Esophagus muscularis mucosa (tissue), 4 donors: ENCODE measurements at regions of chr12 and their contacts with region 1.

Region 1: GRCh38 chr12:11581179-11581755 is 68.2 kb upstream of the ETV6 start:
- DNase-seq: no peak
- H3K4me3 ChIP-seq: no peak overlapping the region
- H3K27ac ChIP-seq: peak overlapping the region in 3 of 4 donors; percentile 56 to 68 (median 66)
- H3K4me1 ChIP-seq: peaks cover 0 to 47% (median 34%) of the 10 kb centered on the region in 4 donors
- H3K27me3 ChIP-seq: no peaks in the 10 kb centered on the region
- CTCF ChIP-seq: peak; percentile 60 to 68 (median 67)
- EP300 ChIP-seq: no peak
- POLR2A ChIP-seq: no peak

Region 2: GRCh38 chr12:11344500-11344899 is 236.8 kb before region 1 on chr12:
- intact Hi-C with region 1: no loop called
- DNase-seq: no peak
- H3K4me3 ChIP-seq: no peak overlapping the region
- H3K27ac ChIP-seq: no peak overlapping the region
- H3K4me1 ChIP-seq: no peaks in the 10 kb centered on the region
- H3K27me3 ChIP-seq: no peaks in the 10 kb centered on the region
- CTCF ChIP-seq: no peak
- EP300 ChIP-seq: no peak
- POLR2A ChIP-seq: no peak

Region 3: DNA sequence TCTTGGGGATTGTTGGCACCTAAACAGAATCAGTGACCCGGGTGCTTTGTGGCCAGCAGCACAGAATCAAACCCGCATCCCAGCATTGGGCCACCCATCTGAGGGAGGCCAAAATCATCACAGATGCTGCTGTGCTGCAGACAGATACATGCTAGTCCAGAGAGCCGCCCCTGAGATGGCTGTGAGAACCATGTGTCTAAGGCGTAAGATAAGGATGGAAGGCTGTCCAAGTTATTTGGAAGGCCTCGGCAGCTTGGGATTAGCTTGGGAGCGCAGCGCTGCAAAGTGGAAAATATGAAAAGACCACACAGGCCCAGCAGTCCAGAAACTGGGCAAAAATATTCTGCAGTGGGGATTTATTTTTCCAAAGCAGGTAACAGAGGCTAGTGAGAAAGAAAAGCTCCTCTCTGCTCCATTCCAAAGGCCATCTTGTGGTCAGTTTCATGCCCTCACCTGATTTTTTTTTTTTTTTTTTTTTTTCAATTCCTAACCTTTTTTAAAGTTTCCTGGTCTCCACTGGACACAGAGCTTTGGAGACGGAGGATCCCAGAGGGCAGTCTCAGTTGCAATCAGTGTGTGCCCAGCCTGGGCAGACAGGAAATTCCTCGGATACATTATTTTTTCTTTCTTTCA is 310.6 kb after region 1 on chr12:
- intact Hi-C with region 1: loop called (anchors 5 kb)
- DNase-seq: no peak
- H3K4me3 ChIP-seq: no peak overlapping the region
- H3K27ac ChIP-seq: peak overlapping the region; percentile 5 to 45 (median 29)
- H3K4me1 ChIP-seq: peaks cover 7 to 18% (median 10%) of the 10 kb centered on the region in 4 donors
- H3K27me3 ChIP-seq: no peaks in the 10 kb centered on the region
- CTCF ChIP-seq: peak in 2 of 3 experiments; percentile 31 to 42
- EP300 ChIP-seq: no peak
- POLR2A ChIP-seq: no peak

Region 4: GRCh38 chr12:12032851-12033588 is 451.8 kb after region 1 on chr12:
- intact Hi-C with region 1: loop called (anchors 1 kb)
- DNase-seq: peak; percentile 94
- H3K4me3 ChIP-seq: peak overlapping the region; percentile 46 to 59 (median 50)
- H3K27ac ChIP-seq: peak overlapping the region; percentile 75 to 79 (median 78)
- H3K4me1 ChIP-seq: peaks cover 8 to 12% (median 10%) of the 10 kb centered on the region in 4 donors
- H3K27me3 ChIP-seq: no peaks in the 10 kb centered on the region
- CTCF ChIP-seq: peak; percentile 83 to 93 (median 90)
- EP300 ChIP-seq: no peak
- POLR2A ChIP-seq: no peak